ENCODE measurements at regions of chr13 and their contacts with region 1.

Region 1: DNA sequence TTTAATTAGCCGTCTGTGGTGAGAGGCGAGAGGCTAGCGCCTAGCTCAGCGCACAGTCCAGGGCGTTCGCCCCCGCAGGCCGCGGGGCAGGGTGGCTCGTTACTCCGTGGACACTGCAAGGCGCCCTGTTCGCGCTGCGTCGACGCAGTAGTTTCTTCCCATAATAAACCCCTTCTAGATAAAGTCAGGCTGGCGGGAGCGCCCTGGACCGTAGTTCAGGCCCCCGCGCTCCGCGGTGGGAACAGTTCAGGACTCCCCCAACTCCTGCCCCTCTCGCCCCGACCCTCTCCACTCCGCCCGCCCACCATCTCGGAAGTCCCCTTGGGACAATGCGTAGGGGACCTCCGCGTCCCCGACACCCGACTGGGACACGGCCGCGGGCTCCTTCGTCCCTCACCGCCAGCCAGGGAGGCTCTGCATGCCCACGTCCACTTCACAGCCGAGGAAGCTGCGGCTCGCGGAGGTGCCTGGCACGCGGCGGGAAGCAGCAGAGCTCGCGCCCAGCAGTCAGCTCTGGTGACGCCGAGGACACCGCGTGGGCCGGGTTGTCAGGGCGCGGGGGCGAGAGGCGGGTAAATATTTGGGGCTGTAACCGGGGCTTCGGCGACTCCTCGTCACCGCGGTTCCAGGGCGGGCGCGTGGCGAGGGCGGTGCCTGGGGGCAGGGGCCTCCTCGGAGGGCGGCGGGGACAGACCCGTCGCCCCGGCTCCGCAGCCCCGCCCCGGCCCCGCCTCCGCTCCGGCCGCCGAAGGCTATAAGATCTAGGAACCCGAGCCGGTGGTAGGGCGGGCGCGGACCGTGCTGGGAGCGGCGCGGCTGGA is at the start of gene RGCC:
- DNase-seq: peak; percentile 89 to 98 (median 94)
- ATAC-seq: peak; percentile 90
- H3K4me3 ChIP-seq: peak within 1 kb of the TSS; percentile 84
- H3K4me3 Mint-ChIP-seq: peak within 1 kb of the TSS; percentile 91 to 98 (median 96)
- H3K27ac ChIP-seq: peak within 1 kb of the TSS; percentile 97
- H3K27ac Mint-ChIP-seq: peak within 1 kb of the TSS; percentile 93 to 99 (median 98)
- H3K4me1 ChIP-seq: peaks cover 22 to 37% of the 10 kb centered on the region in 2 donors
- H3K4me1 Mint-ChIP-seq: peaks cover 28 to 47% (median 38%) of the 10 kb centered on the region in 7 donors
- H3K27me3 ChIP-seq: no peaks in the 10 kb centered on the region
- H3K27me3 Mint-ChIP-seq: peaks cover 0 to 26% (median 0%) of the 10 kb centered on the region in 5 donors
- total RNA-seq, gene RGCC: 45.9 to 402 (median 197) TPM

Region 2: DNA sequence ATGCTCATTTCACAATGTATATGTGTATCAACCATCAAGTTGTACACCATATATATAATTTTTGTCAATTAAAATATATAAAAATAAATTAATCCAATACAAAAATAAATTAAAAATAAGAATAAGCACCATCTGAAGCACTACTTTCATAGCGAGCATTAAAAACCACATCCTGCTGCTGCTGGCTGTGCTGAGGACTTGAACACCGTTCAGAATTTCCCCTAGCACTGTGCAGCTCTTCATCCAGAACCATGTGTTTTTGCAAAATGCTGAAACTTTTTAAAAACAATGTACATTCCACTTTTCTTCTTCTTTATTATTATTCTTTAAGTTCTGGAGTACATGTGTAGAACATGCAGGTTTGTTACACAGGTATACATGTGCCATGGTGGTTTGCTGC is 750.5 kb before region 1 on chr13:
- CTCF ChIA-PET with region 1: no interaction called
- POLR2A ChIA-PET with region 1: no interaction called
- intact Hi-C with region 1: no loop called
- DNase-seq: peak in 5 of 9 donors; percentile 17 to 39 (median 30)
- ATAC-seq: peak; percentile 49
- H3K4me3 ChIP-seq: no peak overlapping the region
- H3K4me3 Mint-ChIP-seq: peak overlapping the region in 3 of 10 donors; percentile 8 to 43 (median 32)
- H3K27ac ChIP-seq: no peak overlapping the region
- H3K27ac Mint-ChIP-seq: peak overlapping the region in 8 of 9 donors; percentile 11 to 78 (median 51)
- H3K4me1 ChIP-seq: peaks cover 0 to 10% of the 10 kb centered on the region in 2 donors
- H3K4me1 Mint-ChIP-seq: peaks cover 1 to 36% (median 28%) of the 10 kb centered on the region in 7 donors
- H3K27me3 ChIP-seq: no peaks in the 10 kb centered on the region
- H3K27me3 Mint-ChIP-seq: no peaks in the 10 kb centered on the region

Region 3: GRCh38 chr13:40982772-40983171 is 474.2 kb before region 1 on chr13:
- CTCF ChIA-PET with region 1: no interaction called
- POLR2A ChIA-PET with region 1: no interaction called
- intact Hi-C with region 1: loop called in 1 of 2 experiments (anchors 5 kb)
- DNase-seq: peak in 8 of 9 donors; percentile 41 to 90 (median 80)
- ATAC-seq: peak; percentile 82
- H3K4me3 ChIP-seq: no peak overlapping the region
- H3K4me3 Mint-ChIP-seq: peak overlapping the region; percentile 76 to 99 (median 94)
- H3K27ac ChIP-seq: peak overlapping the region; percentile 86
- H3K27ac Mint-ChIP-seq: peak overlapping the region; percentile 93 to 98 (median 96)
- H3K4me1 ChIP-seq: peaks cover 30 to 34% of the 10 kb centered on the region in 2 donors
- H3K4me1 Mint-ChIP-seq: peaks cover 40 to 77% (median 65%) of the 10 kb centered on the region in 7 donors
- H3K27me3 ChIP-seq: no peaks in the 10 kb centered on the region
- H3K27me3 Mint-ChIP-seq: no peaks in the 10 kb centered on the region

Region 4: GRCh38 chr13:41193919-41194824 is 262.8 kb before region 1 on chr13 and contains the start of gene KBTBD7:
- CTCF ChIA-PET with region 1: no interaction called
- POLR2A ChIA-PET with region 1: no interaction called
- intact Hi-C with region 1: loop called in 1 of 2 experiments (anchors 5 kb)
- DNase-seq: peak; percentile 78 to 94 (median 83)
- ATAC-seq: peak; percentile 98
- H3K4me3 ChIP-seq: peak within 1 kb of the TSS; percentile 85
- H3K4me3 Mint-ChIP-seq: peak within 1 kb of the TSS; percentile 87 to 98 (median 94)
- H3K27ac ChIP-seq: peak within 1 kb of the TSS; percentile 70
- H3K27ac Mint-ChIP-seq: peak within 1 kb of the TSS; percentile 79 to 94 (median 90)
- H3K4me1 ChIP-seq: peaks cover 0 to 13% of the 10 kb centered on the region in 2 donors
- H3K4me1 Mint-ChIP-seq: peaks cover 25 to 50% (median 41%) of the 10 kb centered on the region in 7 donors
- H3K27me3 ChIP-seq: no peaks in the 10 kb centered on the region
- H3K27me3 Mint-ChIP-seq: no peaks in the 10 kb centered on the region
- total RNA-seq, gene KBTBD7: 2.8 to 12.9 (median 11.5) TPM

Region 5: GRCh38 chr13:41352935-41353840 is 103.8 kb before region 1 on chr13:
- CTCF ChIA-PET with region 1: interaction called, 3 read pairs
- POLR2A ChIA-PET with region 1: interaction called, 19 read pairs
- intact Hi-C with region 1: loop called (anchors 1 to 2 kb)
- DNase-seq: peak; percentile 15 to 74 (median 66)
- ATAC-seq: peak; percentile 80
- H3K4me3 ChIP-seq: no peak overlapping the region
- H3K4me3 Mint-ChIP-seq: peak overlapping the region in 9 of 10 donors; percentile 19 to 80 (median 53)
- H3K27ac ChIP-seq: peak overlapping the region; percentile 68
- H3K27ac Mint-ChIP-seq: peak overlapping the region; percentile 73 to 96 (median 88)
- H3K4me1 ChIP-seq: peaks cover 34 to 52% of the 10 kb centered on the region in 2 donors
- H3K4me1 Mint-ChIP-seq: peaks cover 24 to 72% (median 59%) of the 10 kb centered on the region in 7 donors
- H3K27me3 ChIP-seq: no peaks in the 10 kb centered on the region
- H3K27me3 Mint-ChIP-seq: no peaks in the 10 kb centered on the region

Region 6: DNA sequence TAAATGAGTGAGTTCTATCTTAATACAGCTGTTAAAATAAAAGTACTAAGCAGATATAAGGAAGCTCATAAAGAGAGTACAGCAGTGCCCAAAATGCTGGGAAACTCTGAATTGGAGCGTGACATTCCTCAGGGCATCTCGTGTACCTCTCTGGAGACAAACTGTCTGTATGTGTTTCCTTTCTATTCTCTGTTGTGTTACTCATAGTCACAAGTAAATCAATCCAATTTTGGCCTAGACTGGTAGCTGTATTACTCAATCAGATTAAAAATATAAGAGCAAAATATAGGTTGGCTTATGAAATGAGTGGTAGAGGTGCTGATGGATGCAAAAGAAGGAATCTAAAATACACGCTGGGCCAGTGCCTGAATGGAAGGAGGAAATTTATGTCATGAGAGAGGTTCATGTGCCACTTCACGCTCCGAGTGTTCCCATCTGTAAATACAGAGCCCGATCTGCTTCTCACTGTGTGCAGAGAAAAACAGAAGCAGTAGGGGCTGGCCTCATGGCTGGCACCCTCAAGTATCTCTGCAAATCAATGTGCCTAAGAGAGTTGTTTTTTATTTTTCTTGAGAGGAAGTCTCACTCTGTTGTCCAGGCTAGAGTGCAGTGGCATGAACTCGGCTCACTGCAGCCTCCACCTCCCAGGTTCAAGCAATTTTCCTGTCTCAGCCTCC is 58.3 kb before region 1 on chr13:
- CTCF ChIA-PET with region 1: no interaction called
- POLR2A ChIA-PET with region 1: no interaction called
- intact Hi-C with region 1: no loop called
- DNase-seq: no peak
- ATAC-seq: peak; percentile 14
- H3K4me3 ChIP-seq: no peak overlapping the region
- H3K4me3 Mint-ChIP-seq: no peak overlapping the region
- H3K27ac ChIP-seq: no peak overlapping the region
- H3K27ac Mint-ChIP-seq: peak overlapping the region in 4 of 9 donors; percentile 9 to 69 (median 54)
- H3K4me1 ChIP-seq: no peaks in the 10 kb centered on the region
- H3K4me1 Mint-ChIP-seq: peaks cover 0 to 2% (median 0%) of the 10 kb centered on the region in 7 donors
- H3K27me3 ChIP-seq: no peaks in the 10 kb centered on the region
- H3K27me3 Mint-ChIP-seq: peaks cover 0 to 2% (median 0%) of the 10 kb centered on the region in 5 donors

Region 7: GRCh38 chr13:41492404-41493260 is 35.7 kb after region 1 on chr13:
- CTCF ChIA-PET with region 1: interaction called, 21 read pairs
- POLR2A ChIA-PET with region 1: interaction called, 284 read pairs
- intact Hi-C with region 1: no loop called
- DNase-seq: peak in 7 of 9 donors; percentile 59 to 76 (median 71)
- ATAC-seq: peak; percentile 84
- H3K4me3 ChIP-seq: peak overlapping the region; percentile 19
- H3K4me3 Mint-ChIP-seq: peak overlapping the region; percentile 66 to 91 (median 80)
- H3K27ac ChIP-seq: peak overlapping the region; percentile 76
- H3K27ac Mint-ChIP-seq: peak overlapping the region; percentile 96 to 100 (median 99)
- H3K4me1 ChIP-seq: peaks cover 24 to 78% of the 10 kb centered on the region in 2 donors
- H3K4me1 Mint-ChIP-seq: peaks cover 56 to 97% (median 90%) of the 10 kb centered on the region in 7 donors
- H3K27me3 ChIP-seq: no peaks in the 10 kb centered on the region
- H3K27me3 Mint-ChIP-seq: no peaks in the 10 kb centered on the region

Region 8: GRCh38 chr13:41588899-41589298 is 131.9 kb after region 1 on chr13:
- CTCF ChIA-PET with region 1: interaction called, 31 read pairs
- POLR2A ChIA-PET with region 1: interaction called, 12 read pairs
- intact Hi-C with region 1: loop called (anchors 1 to 2 kb)
- DNase-seq: peak in 1 of 9 donors; percentile 32
- ATAC-seq: peak; percentile 82
- H3K4me3 ChIP-seq: no peak overlapping the region
- H3K4me3 Mint-ChIP-seq: no peak overlapping the region
- H3K27ac ChIP-seq: no peak overlapping the region
- H3K27ac Mint-ChIP-seq: no peak overlapping the region
- H3K4me1 ChIP-seq: peaks cover 0 to 6% of the 10 kb centered on the region in 2 donors
- H3K4me1 Mint-ChIP-seq: peaks cover 0 to 10% (median 4%) of the 10 kb centered on the region in 7 donors
- H3K27me3 ChIP-seq: no peaks in the 10 kb centered on the region
- H3K27me3 Mint-ChIP-seq: no peaks in the 10 kb centered on the region

Region 9: DNA sequence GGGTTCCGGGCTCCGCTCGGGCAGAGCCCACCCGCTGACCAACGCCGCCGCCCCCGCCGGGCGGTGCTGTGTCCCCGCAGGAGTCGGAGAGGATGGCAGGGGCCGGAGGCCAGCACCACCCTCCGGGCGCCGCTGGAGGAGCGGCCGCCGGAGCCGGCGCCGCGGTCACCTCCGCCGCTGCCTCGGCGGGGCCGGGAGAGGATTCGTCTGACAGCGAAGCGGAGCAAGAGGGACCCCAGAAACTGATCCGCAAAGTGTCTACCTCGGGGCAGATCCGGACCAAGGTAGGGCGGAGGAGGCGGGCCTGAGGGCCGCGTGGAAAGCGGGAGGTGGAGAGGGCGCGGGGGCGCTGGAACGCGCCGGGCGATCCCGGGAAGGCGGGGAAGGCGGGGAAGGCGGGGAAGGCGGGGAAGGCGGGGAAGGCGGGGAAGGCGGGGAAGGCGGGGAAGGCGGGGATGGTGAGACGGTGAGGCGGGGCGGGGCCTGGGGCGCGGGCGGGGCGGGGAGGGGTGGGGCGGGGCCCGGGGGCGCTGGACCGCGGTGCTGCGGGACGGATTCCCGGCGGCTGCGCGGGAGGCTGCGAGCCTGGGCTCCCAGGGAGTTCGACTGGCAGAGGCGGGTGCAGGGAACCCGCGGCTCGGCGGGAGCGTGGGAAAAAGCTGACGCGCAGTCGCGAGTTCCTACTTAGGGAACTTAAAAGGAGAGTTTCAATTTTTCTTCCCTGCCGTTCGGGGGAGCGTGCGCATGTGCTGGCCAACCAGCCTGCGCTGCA is 591.9 kb after region 1 on chr13:
- CTCF ChIA-PET with region 1: no interaction called
- POLR2A ChIA-PET with region 1: no interaction called
- intact Hi-C with region 1: loop called (anchors 5 kb)
- DNase-seq: peak; percentile 20 to 81 (median 43)
- ATAC-seq: peak; percentile 81
- H3K4me3 ChIP-seq: peak overlapping the region; percentile 84
- H3K4me3 Mint-ChIP-seq: peak overlapping the region; percentile 83 to 96 (median 92)
- H3K27ac ChIP-seq: peak overlapping the region; percentile 67
- H3K27ac Mint-ChIP-seq: peak overlapping the region in 2 of 9 donors; percentile 74 to 78
- H3K4me1 ChIP-seq: peaks cover 5 to 9% of the 10 kb centered on the region in 2 donors
- H3K4me1 Mint-ChIP-seq: peaks cover 6 to 38% (median 15%) of the 10 kb centered on the region in 7 donors
- H3K27me3 ChIP-seq: no peaks in the 10 kb centered on the region
- H3K27me3 Mint-ChIP-seq: peaks cover 0 to 15% (median 0%) of the 10 kb centered on the region in 5 donors